ENCODE measurements at regions of chr11 and their contacts with region 1.

Region 1: DNA sequence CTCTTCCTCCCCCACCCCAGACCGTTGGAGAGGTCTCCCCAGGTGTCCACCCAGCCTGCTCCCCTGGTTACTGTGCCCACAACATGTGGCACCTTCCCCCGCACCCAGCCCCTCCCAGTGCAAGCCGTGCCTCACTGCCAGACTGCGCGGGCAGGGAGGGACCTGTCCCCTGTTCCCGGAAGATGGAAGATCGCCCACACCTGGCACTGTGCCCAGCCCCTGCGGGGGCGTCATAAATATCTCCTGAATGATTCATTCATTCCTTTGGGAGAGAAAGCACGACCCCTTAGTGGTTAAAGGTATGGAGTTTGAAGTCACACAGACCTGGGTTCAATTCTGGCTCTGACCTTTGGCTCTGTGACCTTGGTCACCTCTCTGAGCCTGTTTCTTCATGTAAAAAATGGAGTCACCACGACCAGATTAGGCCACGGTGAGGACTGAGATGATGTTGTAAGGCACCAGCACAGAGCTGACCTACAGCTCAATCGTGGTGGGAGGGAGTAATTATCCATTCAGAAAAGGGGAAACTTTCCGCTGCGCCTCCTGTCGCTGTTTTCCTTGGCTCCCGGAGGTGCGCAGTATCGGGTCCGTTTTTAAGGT is 506 bp upstream of the SYT12 start:
- DNase-seq: peak; percentile 96
- ATAC-seq: peak; percentile 45
- H3K4me3 ChIP-seq: peak overlapping the region; percentile 68
- H3K27ac ChIP-seq: no peak overlapping the region
- H3K4me1 ChIP-seq: peaks cover 31% of the 10 kb centered on the region
- H3K27me3 ChIP-seq: no peaks in the 10 kb centered on the region
- CTCF ChIP-seq: 0 out of 2 replicates have a peak, but pooled peaks have one; percentile 7

Region 2: GRCh38 chr11:66936311-66936711 is 86.1 kb before region 1 on chr11:
- CTCF ChIA-PET with region 1: no interaction called
- POLR2A ChIA-PET with region 1: interaction called, 11 read pairs
- intact Hi-C with region 1: no loop called
- DNase-seq: no peak
- ATAC-seq: no peak
- H3K4me3 ChIP-seq: no peak overlapping the region
- H3K27ac ChIP-seq: no peak overlapping the region
- H3K4me1 ChIP-seq: no peaks in the 10 kb centered on the region
- H3K27me3 ChIP-seq: no peaks in the 10 kb centered on the region
- CTCF ChIP-seq: no peak

Region 3: GRCh38 chr11:67277231-67277961 is 255.0 kb after region 1 on chr11:
- CTCF ChIA-PET with region 1: interaction called, 13 read pairs
- POLR2A ChIA-PET with region 1: no interaction called
- intact Hi-C with region 1: no loop called
- DNase-seq: no peak
- ATAC-seq: peak; percentile 59
- H3K4me3 ChIP-seq: no peak overlapping the region
- H3K27ac ChIP-seq: no peak overlapping the region
- H3K4me1 ChIP-seq: no peaks in the 10 kb centered on the region
- H3K27me3 ChIP-seq: no peaks in the 10 kb centered on the region
- CTCF ChIP-seq: no peak